ENCODE measurements at regions of chr20 and their contacts with region 1.

Region 1: GRCh38 chr20:24917797-24918578 is 31.1 kb upstream of the CST7 start:
- DNase-seq: peak; percentile 73 to 80
- ATAC-seq: peak; percentile 77 to 98
- H3K4me3 ChIP-seq: no peak overlapping the region
- H3K27ac ChIP-seq: peak overlapping the region in 1 of 2 experiments; percentile 50; a peak in 1 of 6 replicates
- H3K4me1 ChIP-seq: no peaks in the 10 kb centered on the region
- CTCF ChIP-seq: peak; percentile 88
- EP300 ChIP-seq: no peak
- POLR2A ChIP-seq: no peak
- RAD21 ChIP-seq: peak; percentile 98

Region 2: GRCh38 chr20:23937303-23938117 is 980.5 kb before region 1 on chr20:
- CTCF ChIA-PET with region 1: interaction called, 76 read pairs
- POLR2A ChIA-PET with region 1: no interaction called
- DNase-seq: peak; percentile 35 to 73
- ATAC-seq: peak; percentile 99 to 100
- H3K4me3 ChIP-seq: no peak overlapping the region
- H3K27ac ChIP-seq: no peak overlapping the region
- H3K4me1 ChIP-seq: no peaks in the 10 kb centered on the region
- CTCF ChIP-seq: peak; percentile 78
- EP300 ChIP-seq: no peak
- POLR2A ChIP-seq: no peak
- RAD21 ChIP-seq: peak; percentile 96

Region 3: DNA sequence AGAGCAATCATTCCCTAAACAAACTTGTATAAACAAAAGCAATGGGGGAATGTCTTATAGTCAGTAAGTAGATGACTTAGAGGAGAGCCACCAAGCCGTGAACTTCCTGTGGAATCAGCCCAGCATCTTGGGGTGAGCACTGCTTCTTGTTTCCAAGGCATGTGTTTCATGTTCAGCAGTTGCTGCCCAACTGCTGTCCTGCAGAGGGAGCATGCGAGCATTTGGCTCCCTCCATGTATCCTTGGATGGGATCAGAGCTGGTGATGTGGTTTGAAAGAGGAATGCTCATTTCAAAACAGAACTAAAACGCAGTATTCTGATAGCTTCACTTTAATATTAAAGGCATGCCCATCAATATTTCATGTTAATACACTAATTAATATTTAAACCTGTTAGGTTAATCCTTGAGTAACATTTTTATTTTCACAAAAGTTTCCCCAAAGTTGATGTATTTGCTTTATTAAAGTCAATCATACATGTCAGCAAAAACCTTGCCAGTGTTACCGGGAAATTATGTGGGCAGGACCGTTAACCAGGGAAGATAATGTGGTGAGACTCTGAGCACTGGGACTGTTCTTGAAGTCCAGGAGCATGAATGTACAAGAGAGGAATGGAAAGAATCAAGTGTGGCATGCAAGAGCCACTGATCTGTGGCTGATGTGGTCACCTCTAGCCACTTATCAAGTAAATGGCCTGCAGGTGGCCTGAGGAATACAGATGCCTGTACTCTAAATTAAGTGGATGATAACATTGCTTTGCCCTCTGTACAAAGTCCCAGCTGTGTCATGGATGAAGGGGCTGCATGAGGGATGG is 757.2 kb before region 1 on chr20:
- CTCF ChIA-PET with region 1: interaction called, 59 read pairs
- POLR2A ChIA-PET with region 1: no interaction called
- DNase-seq: peak; percentile 57 to 61
- ATAC-seq: peak; percentile 83 to 95; a peak in 5 of 6 replicates
- H3K4me3 ChIP-seq: no peak overlapping the region
- H3K27ac ChIP-seq: no peak overlapping the region
- H3K4me1 ChIP-seq: no peaks in the 10 kb centered on the region
- CTCF ChIP-seq: peak; percentile 64
- EP300 ChIP-seq: no peak
- POLR2A ChIP-seq: no peak
- RAD21 ChIP-seq: peak; percentile 54 to 60; a peak in 4 of 5 replicates

Region 4: GRCh38 chr20:24662752-24663365 is 255.1 kb before region 1 on chr20:
- CTCF ChIA-PET with region 1: no interaction called
- POLR2A ChIA-PET with region 1: no interaction called
- DNase-seq: no peak
- ATAC-seq: no peak
- H3K4me3 ChIP-seq: no peak overlapping the region
- H3K27ac ChIP-seq: no peak overlapping the region
- H3K4me1 ChIP-seq: peaks cover under 1% of the 10 kb centered on the region; the same call in 1 of the 3 replicates
- CTCF ChIP-seq: no peak
- EP300 ChIP-seq: no peak
- POLR2A ChIP-seq: no peak
- RAD21 ChIP-seq: no peak

Region 5: GRCh38 chr20:24891546-24892393 is 26.2 kb before region 1 on chr20:
- CTCF ChIA-PET with region 1: interaction called, 10 read pairs
- POLR2A ChIA-PET with region 1: no interaction called
- DNase-seq: no peak
- ATAC-seq: peak in 1 of 2 experiments; percentile 15; a peak in 2 of 6 replicates
- H3K4me3 ChIP-seq: no peak overlapping the region
- H3K27ac ChIP-seq: no peak overlapping the region
- H3K4me1 ChIP-seq: no peaks in the 10 kb centered on the region
- CTCF ChIP-seq: no peak
- EP300 ChIP-seq: no peak
- POLR2A ChIP-seq: no peak
- RAD21 ChIP-seq: no peak

Region 6: DNA sequence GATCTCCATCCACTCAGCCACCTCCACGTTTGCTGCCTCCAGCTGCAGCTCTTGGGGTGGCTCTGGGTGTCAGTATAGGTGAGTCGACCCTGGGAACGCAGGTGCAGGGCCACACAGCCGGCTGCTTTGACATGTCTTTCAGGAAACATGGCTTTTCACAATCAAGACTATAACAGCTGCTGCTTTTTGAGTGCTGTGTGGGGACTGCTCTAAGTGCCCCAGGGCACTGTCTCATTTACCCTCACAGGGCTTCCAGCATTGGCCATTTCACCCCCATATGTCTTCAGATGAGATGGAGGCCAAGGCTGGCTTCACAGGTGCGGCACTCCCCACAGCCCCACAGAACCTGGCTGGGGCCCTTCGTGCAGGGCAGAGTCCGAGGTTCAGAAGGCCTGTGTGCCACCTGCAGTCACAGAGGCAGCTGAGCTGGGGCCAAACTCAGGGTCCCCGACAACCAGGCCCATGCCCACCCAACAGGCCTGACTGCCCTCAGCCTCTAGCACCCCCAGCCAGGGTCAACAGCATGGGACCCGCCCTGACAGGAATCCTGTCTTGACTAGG is 16.2 kb after region 1 on chr20:
- CTCF ChIA-PET with region 1: interaction called, 70 read pairs
- POLR2A ChIA-PET with region 1: no interaction called
- DNase-seq: no peak
- ATAC-seq: no peak
- H3K4me3 ChIP-seq: no peak overlapping the region
- H3K27ac ChIP-seq: no peak overlapping the region
- H3K4me1 ChIP-seq: no peaks in the 10 kb centered on the region
- CTCF ChIP-seq: no peak
- EP300 ChIP-seq: no peak
- POLR2A ChIP-seq: no peak
- RAD21 ChIP-seq: no peak

Measured in A549 (cell line).